AG04449 (cell line): ENCODE measurements at regions of chr1 and their contacts with region 1.

Region 1: GRCh38 chr1:169794530-169795416 is at the start of gene METTL18:
- DNase-seq: peak; percentile 80
- H3K4me3 ChIP-seq: peak within 1 kb of the TSS; percentile 81
- CTCF ChIP-seq: no peak

Region 2: DNA sequence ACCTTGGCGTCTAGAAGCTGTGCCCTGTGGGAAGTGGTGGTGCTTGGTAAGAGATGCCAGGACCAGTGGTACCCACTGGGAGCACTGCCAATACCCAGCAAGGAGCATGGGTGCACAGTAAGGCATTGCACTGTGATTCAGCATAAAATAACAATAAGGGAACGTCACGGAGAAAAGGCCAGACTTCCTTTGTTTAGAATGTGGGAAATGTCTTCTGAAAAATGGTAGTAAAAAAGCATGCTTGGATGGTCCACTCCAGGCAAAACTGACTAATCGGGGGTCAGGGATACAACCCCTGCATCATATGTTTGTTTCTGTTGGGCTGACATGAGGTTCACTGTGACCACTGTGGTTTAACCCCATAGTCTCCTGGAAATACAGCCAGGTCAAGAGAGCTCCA is 14.8 kb before region 1 on chr1:
- CTCF ChIA-PET with region 1: no interaction called
- POLR2A ChIA-PET with region 1: no interaction called
- DNase-seq: no peak
- H3K4me3 ChIP-seq: no peak overlapping the region
- CTCF ChIP-seq: no peak

Region 3: DNA sequence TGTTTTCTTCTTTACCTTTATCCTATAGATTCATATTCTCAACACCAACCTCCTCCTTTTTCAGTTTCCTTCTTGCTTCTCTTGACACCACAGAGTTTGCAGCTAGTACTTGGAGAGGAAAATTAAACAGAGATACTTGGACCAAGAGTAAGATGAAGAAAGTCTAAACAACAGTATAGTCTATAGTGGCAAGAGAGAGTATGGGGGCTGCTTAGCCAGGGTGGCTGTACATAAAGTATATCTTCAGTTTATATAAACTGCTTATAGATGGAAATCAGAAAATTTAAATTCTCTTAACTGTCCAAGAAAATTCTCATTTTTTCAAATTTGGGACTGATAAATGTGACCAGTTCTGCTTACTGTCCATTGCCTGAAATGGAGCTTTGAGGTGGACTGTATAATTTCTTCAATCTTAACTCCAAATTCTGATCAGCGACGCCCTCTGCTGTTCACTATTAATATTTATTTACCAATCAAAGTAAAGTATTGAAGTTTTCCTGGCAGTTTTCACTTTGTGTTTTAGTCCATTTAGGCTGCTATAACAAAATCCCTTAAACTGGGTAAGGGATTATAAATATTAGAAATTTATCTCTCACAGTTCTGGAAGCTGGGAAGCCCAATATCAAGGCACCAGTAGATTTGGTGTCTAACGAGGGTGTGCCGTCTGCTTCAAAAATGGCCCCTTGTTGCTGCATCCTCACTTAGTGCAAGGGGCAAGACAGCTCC is 14.8 kb after region 1 on chr1:
- CTCF ChIA-PET with region 1: interaction called, 58 read pairs
- POLR2A ChIA-PET with region 1: no interaction called
- DNase-seq: no peak
- H3K4me3 ChIP-seq: no peak overlapping the region
- CTCF ChIP-seq: peak; percentile 21